Mammary epithelial cell (primary cell): ENCODE measurements at regions of chr11 and their contacts with region 1.

Region 1: DNA sequence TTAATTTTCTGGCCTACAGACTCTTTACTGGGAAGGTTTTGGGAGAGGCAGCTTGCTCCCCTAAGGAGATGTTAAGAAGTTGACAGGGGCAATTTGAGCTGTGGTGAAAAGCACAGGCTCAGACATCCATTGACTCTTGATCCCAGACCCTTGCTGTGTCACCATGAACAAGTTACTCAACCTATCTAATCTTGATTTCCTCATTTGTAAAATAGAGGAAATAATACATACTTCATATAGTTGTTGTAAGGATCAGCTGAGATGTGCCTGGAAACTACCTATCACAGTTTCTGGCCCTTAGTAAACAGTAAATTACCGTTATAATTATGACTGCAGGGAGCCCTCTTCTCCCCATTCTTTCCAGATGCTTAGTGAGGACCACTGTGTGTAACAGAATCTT is 16.6 kb upstream of the SCGB1D4 start:
- DNase-seq: no peak
- H3K4me3 ChIP-seq: no peak overlapping the region
- H3K27ac ChIP-seq: no peak overlapping the region
- H3K4me1 ChIP-seq: no peaks in the 10 kb centered on the region
- H3K27me3 ChIP-seq: no peaks in the 10 kb centered on the region
- CTCF ChIP-seq: no peak

Region 2: DNA sequence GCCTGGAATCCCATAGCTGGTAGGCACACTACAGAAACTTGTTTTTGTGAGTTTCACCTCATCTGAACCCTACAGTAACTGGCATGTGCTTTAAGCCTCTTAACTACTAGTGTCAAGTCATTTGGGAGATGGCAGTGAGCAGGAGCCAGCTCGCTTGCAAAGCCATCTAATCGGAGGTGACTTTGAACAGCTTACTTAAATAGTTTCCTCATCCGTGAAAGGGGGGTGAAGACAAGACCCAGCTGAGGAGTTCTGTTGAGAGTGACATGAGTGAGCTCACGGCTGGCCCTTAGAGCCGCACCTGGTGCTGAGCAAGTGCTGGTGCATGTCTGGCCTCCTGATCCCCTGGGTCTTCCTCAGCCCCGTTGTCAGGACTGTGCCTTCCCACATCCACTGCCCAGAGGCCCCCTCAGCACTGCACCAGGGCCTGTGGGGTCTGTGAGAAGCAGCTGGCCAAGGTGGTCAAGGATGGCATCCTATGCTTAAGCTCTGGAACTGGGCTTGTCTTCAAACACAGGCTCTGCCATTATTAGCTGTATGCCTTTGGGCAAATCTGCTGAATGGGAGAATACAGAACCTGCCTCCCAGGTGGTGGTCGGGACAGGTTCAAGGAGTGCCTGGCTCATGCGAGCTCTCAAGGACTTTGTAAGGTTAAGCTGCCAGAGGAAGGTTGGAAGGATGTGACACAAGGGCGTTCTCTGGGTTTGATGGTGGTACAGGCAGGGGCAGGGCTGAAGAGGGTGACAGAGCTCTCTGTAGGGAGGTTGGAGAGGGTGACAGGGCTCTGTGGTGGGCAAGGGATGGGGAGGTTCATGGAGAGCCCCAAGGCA is 164.3 kb before region 1 on chr11:
- CTCF ChIA-PET with region 1: no interaction called
- dilution Hi-C with region 1: no loop called
- in situ Hi-C with region 1: loop called in 1 of 2 experiments (anchors 10 kb)
- intact Hi-C with region 1: no loop called
- DNase-seq: no peak
- H3K4me3 ChIP-seq: no peak overlapping the region
- H3K27ac ChIP-seq: no peak overlapping the region
- H3K4me1 ChIP-seq: no peaks in the 10 kb centered on the region
- H3K27me3 ChIP-seq: no peaks in the 10 kb centered on the region
- CTCF ChIP-seq: no peak

Region 3: DNA sequence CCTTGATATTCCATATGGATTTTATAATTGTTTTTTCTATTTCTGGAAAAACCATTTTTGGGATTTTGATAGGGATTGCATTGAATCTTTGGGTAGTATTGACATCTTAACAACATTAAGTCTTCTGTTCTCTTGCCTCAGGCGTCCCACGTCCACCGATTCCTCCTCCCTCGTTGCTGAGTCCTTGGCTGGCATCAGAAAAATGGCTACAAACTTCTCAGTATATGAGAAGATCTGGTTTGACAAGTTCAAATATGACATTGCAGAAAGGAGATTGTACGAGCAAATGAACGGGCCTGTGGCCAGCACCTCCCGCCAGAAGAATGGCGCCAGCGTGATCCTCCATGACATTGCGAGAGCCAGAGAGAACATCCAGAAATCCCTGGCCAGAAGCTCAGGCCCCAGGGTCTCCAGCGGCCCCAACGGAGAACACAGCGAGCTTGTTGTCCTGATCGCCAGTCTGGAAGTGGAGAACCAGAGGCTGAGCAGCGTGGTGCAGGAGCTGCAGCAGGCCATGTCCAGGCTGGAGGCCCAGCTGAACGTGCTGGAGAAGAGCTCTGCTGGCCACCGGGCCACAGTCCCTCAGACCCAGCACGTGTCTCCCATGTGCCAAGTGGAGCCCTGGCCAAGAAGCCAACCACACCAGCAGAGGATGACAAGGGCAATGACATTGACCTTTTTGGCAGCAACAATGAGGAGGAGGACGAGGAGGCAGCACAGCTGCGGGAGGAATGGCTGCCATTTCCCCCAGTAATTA is 146.2 kb before region 1 on chr11:
- CTCF ChIA-PET with region 1: no interaction called
- dilution Hi-C with region 1: no loop called
- in situ Hi-C with region 1: no loop called
- intact Hi-C with region 1: loop called (anchors 1 kb)
- DNase-seq: no peak
- H3K4me3 ChIP-seq: no peak overlapping the region
- H3K27ac ChIP-seq: no peak overlapping the region
- H3K4me1 ChIP-seq: no peaks in the 10 kb centered on the region
- H3K27me3 ChIP-seq: no peaks in the 10 kb centered on the region
- CTCF ChIP-seq: no peak

Region 4: DNA sequence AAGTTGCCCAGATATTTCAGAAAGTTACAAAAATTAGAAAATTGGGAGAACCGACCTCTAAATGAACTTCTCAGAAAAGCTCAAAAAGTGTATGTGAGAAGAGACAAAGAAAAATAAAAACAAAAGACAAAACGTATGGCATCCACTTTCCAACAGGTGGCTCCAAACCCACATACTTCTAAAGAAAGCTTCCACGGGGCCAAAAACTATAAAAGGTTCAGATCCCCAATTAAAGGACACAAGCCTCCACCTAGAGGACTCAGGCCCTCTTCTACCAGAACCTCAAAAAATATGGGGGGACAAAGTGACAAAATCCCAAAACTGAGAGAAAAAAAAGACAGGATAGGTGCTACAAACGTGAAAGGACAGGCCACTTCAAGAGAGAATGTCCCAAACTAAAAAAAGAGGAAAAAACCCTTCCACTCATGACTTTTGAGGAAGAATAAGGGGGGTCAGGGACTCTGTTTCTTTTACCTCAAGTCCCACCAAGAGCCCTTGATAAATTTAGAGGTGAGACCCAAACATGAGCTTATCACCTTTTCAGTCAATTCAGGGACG is 98.2 kb before region 1 on chr11:
- CTCF ChIA-PET with region 1: no interaction called
- dilution Hi-C with region 1: no loop called
- in situ Hi-C with region 1: loop called (anchors 5 to 10 kb)
- intact Hi-C with region 1: loop called (anchors 1 kb)
- DNase-seq: no peak
- H3K4me3 ChIP-seq: no peak overlapping the region
- H3K27ac ChIP-seq: no peak overlapping the region
- H3K4me1 ChIP-seq: no peaks in the 10 kb centered on the region
- H3K27me3 ChIP-seq: no peaks in the 10 kb centered on the region
- CTCF ChIP-seq: peak; percentile 37 to 62

Region 5: GRCh38 chr11:62233730-62234129 is 81.7 kb before region 1 on chr11:
- CTCF ChIA-PET with region 1: no interaction called
- dilution Hi-C with region 1: no loop called
- in situ Hi-C with region 1: no loop called
- intact Hi-C with region 1: loop called (anchors 1 kb)
- DNase-seq: no peak
- H3K4me3 ChIP-seq: no peak overlapping the region
- H3K27ac ChIP-seq: no peak overlapping the region
- H3K4me1 ChIP-seq: no peaks in the 10 kb centered on the region
- H3K27me3 ChIP-seq: no peaks in the 10 kb centered on the region
- CTCF ChIP-seq: peak in 1 of 2 donors; percentile 33

Region 6: DNA sequence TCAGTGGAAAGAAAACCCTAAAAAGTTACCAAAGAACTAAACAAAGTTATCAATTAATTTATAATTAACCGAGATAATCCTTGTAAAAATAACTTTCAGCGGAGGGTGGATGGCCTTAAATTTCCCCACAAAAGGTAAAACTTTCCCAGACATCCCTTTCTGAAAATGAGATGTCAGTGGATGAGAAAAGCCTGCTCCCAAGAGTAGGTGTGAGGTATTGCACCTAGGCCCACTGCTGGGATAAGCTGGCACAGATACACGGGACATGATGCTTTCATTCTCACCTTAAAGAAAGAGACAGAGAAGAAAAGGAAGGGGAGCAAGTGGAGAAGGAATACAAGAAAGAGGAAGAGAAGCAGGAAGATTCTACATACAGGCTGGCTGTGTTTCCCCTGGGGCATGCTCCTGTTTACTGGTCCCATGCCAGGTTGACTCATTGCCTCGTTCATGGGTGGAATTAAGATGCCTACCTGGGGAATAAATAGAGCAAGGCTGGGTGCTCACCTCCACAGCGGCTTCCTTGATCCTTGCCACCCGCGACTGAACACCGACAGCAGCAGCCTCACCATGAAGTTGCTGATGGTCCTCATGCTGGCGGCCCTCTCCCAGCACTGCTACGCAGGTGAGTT is 45.7 kb before region 1 on chr11 and contains the start of gene SCGB2A2:
- CTCF ChIA-PET with region 1: no interaction called
- dilution Hi-C with region 1: no loop called
- in situ Hi-C with region 1: no loop called
- intact Hi-C with region 1: no loop called
- DNase-seq: peak; percentile 13
- H3K4me3 ChIP-seq: no peak within 1 kb of the TSS
- H3K27ac ChIP-seq: no peak within 1 kb of the TSS
- H3K4me1 ChIP-seq: no peaks in the 10 kb centered on the region
- H3K27me3 ChIP-seq: no peaks in the 10 kb centered on the region
- CTCF ChIP-seq: peak; percentile 48 to 58
- total RNA-seq, gene SCGB2A2: not detected